A673 (cell line): ENCODE measurements at regions of chr7 and their contacts with region 1.

Region 1: DNA sequence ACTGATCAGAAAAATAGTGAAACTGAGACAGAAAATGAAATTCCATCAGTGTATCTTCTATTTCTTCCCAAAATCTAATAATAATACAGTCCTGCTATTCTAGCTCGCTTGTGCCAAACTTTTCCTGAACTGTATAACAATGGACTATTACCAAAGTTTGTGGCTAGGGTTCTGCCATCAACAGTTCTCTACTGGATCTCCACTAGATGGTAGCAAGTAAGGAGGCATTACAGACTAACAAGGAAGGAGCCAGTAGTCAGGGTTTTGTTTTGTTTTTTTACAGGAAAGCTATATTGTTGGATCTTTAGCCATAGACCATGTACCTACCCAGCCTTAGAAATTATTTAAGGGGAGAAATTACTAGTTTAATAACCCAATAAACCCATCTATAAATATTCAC is 10.8 kb downstream of the MTERF1 start:
- DNase-seq: peak; percentile 39
- H3K4me3 ChIP-seq: no peak overlapping the region
- H3K27ac ChIP-seq: peak overlapping the region; percentile 99
- H3K4me1 ChIP-seq: peaks cover 72% of the 10 kb centered on the region
- H3K27me3 ChIP-seq: no peaks in the 10 kb centered on the region
- CTCF ChIP-seq: peak; percentile 44

Region 2: DNA sequence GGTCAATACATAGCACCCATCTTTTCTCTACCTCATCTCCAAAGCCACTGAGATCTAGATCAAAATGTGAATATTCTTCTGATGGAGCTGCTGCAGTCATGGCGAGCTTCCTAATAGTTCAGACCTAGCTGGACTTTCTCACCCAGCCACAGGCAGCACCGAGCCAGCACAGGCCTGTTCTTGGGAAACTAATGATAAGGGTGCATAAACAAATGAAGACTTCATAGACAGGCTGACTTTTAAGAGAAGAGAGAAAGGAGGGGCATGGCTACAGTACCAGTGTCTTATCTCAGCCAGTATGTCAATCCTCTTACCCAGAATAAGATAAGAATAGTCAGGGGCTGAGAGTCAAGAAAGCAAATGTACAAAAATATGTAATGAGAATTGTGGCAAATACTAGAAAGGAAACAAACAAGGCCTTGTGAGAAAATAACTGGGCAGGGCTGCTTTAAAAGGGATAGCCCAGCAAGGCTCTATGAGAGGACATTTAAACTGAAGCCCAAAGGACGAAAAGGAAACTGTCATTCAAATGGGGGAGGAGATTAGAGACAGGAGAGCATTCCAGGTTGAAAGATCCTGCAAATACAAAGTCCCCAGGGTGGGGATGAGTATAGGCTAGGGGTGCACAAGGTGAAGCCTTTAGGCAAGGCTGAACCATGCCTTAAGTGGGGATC is 1295.4 kb before region 1 on chr7:
- CTCF ChIA-PET with region 1: no interaction called
- POLR2A ChIA-PET with region 1: no interaction called
- intact Hi-C with region 1: no loop called
- DNase-seq: no peak
- H3K4me3 ChIP-seq: no peak overlapping the region
- H3K27ac ChIP-seq: no peak overlapping the region
- H3K4me1 ChIP-seq: no peaks in the 10 kb centered on the region
- H3K27me3 ChIP-seq: no peaks in the 10 kb centered on the region
- CTCF ChIP-seq: no peak

Region 3: GRCh38 chr7:90621125-90621746 is 1248.4 kb before region 1 on chr7:
- CTCF ChIA-PET with region 1: no interaction called
- POLR2A ChIA-PET with region 1: no interaction called
- intact Hi-C with region 1: loop called (anchors 1 kb)
- DNase-seq: peak; percentile 93
- H3K4me3 ChIP-seq: no peak overlapping the region
- H3K27ac ChIP-seq: peak overlapping the region; percentile 97
- H3K4me1 ChIP-seq: peaks cover 97% of the 10 kb centered on the region
- H3K27me3 ChIP-seq: no peaks in the 10 kb centered on the region
- CTCF ChIP-seq: no peak

Region 4: GRCh38 chr7:90857603-90858002 is 1012.1 kb before region 1 on chr7:
- CTCF ChIA-PET with region 1: no interaction called
- POLR2A ChIA-PET with region 1: interaction called, 12 read pairs
- intact Hi-C with region 1: no loop called
- DNase-seq: peak; percentile 12
- H3K4me3 ChIP-seq: no peak overlapping the region
- H3K27ac ChIP-seq: no peak overlapping the region
- H3K4me1 ChIP-seq: peaks cover 3% of the 10 kb centered on the region
- H3K27me3 ChIP-seq: no peaks in the 10 kb centered on the region
- CTCF ChIP-seq: no peak; the same call in 1 of the 2 replicates

Region 5: DNA sequence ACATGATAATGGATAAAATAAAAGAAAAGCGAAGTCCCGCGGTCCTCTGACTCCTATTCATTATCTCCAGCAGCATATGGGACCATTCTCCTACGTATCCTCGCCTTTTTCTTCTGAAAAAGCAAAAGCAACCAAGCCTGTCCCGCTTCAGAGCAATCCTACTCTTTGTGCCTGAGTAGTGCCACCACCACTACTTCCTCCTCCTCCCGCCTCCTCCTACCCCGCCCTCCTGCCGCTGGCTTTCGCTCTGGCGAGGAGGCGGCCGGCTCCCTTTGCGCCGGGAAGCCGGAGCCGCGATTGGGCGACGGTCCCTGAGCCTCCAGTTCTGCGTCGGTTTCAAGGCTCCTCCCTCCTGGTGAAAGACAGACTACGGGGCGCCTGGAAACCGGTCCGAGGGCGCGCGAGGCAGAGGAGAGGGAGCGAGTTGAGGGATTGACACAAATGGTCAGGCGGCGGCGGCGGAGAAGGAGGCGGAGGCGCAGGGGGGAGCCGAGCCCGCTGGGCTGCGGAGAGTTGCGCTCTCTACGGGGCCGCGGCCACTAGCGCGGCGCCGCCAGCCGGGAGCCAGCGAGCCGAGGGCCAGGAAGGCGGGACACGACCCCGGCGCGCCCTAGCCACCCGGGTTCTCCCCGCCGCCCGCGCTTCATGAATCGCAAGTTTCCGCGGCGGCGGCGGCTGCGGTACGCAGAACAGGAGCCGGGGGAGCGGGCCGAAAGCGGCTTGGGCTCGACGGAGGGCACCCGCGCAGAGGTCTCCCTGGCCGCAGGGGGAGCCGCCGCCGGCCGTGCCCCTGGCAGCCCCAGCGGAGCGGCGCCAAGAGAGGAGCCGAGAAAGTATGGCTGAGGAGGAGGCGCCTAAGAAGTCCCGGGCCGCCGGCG is 605.4 kb before region 1 on chr7 and contains the start of gene FZD1:
- CTCF ChIA-PET with region 1: no interaction called
- POLR2A ChIA-PET with region 1: no interaction called
- intact Hi-C with region 1: loop called (anchors 5 kb)
- DNase-seq: peak; percentile 100
- H3K4me3 ChIP-seq: peak within 1 kb of the TSS; percentile 92
- H3K27ac ChIP-seq: peak within 1 kb of the TSS; percentile 97
- H3K4me1 ChIP-seq: peaks cover 21% of the 10 kb centered on the region
- H3K27me3 ChIP-seq: no peaks in the 10 kb centered on the region
- CTCF ChIP-seq: no peak
- total RNA-seq, gene FZD1: 47.6 and 49.9 TPM in 2 replicates

Region 6: DNA sequence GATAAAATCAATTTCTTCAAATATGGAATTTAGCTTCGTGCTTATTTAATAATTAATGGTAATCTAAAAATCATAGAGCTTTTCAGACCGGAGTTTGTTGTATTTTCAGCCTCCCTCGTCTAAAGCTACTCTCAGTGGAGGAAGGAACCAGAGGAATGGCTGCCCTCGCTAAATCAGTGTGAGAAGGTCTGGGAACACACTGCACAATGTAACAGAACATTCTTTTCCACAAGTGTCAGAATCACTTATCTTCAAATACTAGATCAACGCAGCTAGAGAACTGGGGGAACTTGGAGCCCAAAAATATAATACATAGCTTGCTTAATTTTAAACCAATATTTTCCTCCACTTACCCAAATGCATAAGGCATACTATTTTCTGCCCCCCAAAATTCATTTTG is 137.7 kb before region 1 on chr7:
- CTCF ChIA-PET with region 1: no interaction called
- POLR2A ChIA-PET with region 1: no interaction called
- intact Hi-C with region 1: no loop called
- DNase-seq: no peak
- H3K4me3 ChIP-seq: no peak overlapping the region
- H3K27ac ChIP-seq: no peak overlapping the region
- H3K4me1 ChIP-seq: no peaks in the 10 kb centered on the region
- H3K27me3 ChIP-seq: no peaks in the 10 kb centered on the region
- CTCF ChIP-seq: no peak

Region 7: DNA sequence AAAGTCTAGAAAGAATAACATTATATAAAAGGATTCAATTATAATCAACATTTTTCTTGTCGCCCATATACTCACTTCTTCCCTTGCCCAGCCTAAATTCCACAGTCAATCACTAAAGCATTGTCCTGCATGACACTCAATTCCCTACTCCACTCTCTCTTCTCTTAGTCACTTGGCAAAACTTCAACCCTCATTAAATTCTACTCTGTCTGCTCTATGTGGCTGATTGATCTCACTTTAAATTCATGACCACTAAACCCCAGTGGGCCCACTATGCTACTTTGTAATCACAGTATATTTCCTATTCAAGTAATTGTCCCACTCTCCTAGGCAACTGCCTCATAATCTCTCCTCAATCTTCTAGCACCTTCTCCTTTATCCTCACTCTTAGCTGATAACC is 43.3 kb before region 1 on chr7:
- CTCF ChIA-PET with region 1: interaction called, 6 read pairs
- POLR2A ChIA-PET with region 1: no interaction called
- intact Hi-C with region 1: loop called (anchors 1 kb)
- DNase-seq: peak; percentile 96
- H3K4me3 ChIP-seq: peak overlapping the region; percentile 7
- H3K27ac ChIP-seq: peak overlapping the region; percentile 84
- H3K4me1 ChIP-seq: peaks cover 62% of the 10 kb centered on the region
- H3K27me3 ChIP-seq: no peaks in the 10 kb centered on the region
- CTCF ChIP-seq: no peak